Upper lobe of right lung (tissue), 1 donor: ENCODE measurements at regions of chr14 and their contacts with region 1.

Region 1: DNA sequence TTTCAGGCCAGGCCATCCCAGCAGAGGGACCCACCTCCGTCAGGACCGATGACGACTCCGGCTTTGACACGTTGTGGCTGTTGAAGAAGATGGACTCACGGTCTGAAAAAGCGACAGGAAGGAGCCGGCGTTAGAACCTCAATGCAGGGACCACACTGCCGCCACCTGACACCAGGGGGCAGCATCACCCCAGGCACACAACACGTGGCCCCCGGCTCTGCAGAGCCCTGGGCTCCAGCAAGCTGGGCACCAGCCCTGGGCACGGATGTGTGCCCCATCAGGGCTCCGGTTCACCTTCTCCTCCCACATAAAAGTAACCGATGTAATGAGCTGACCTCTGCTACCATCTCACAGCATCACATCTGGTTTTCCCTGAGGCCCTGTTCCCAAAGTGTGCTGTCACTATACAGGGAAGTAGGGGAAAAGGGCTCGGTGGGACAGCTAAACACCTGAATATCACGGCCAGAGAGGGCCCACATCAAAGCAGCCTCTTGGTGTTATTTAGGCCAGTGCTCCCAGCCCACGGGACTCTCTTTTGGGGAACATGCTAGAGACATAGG is 29.0 kb downstream of the CHGA start:
- DNase-seq: peak; percentile 89
- ATAC-seq: peak; percentile 94
- H3K4me3 ChIP-seq: no peak overlapping the region
- H3K27ac ChIP-seq: no peak overlapping the region
- H3K4me1 ChIP-seq: no peaks in the 10 kb centered on the region
- H3K27me3 ChIP-seq: no peaks in the 10 kb centered on the region
- CTCF ChIP-seq: peak; percentile 97

Region 2: GRCh38 chr14:93033983-93034670 is 82.1 kb after region 1 on chr14:
- intact Hi-C with region 1: no loop called
- DNase-seq: no peak
- ATAC-seq: peak; percentile 15
- H3K4me3 ChIP-seq: no peak overlapping the region
- H3K27ac ChIP-seq: no peak overlapping the region
- H3K4me1 ChIP-seq: peaks cover 49% of the 10 kb centered on the region
- H3K27me3 ChIP-seq: no peaks in the 10 kb centered on the region
- CTCF ChIP-seq: peak; percentile 42

Region 3: DNA sequence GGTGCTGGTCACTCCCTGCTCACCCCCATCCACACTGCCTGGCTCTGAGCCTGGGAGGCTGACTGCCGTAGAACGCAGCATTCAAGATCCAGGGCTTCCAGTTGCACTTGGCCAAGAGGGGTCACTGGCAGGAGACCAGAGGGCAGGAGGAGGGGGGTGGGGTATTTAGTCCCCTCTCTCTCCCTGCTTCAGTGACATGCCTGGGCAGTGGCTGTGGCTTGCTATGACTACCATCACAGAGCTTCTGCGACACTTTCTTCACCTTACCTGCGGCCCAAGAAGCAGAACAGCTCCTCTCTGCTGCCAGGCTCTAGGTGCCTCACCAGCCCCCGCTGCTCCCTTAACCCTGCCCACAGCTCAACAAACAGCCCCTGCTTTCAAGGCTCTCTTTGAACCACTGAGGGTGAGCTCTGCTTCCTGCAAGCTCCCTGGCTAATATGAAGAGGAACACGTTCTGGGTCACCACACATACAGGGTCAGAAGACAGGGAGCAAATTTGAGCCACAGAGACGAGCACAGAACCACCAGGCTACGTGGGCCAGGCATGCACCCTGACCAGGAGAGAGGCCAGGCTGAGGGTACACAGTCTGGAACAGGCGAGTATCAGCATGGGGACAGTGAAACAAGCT is 108.0 kb after region 1 on chr14:
- intact Hi-C with region 1: no loop called
- DNase-seq: no peak
- ATAC-seq: peak; percentile 18
- H3K4me3 ChIP-seq: no peak overlapping the region
- H3K27ac ChIP-seq: no peak overlapping the region
- H3K4me1 ChIP-seq: peaks cover under 1% of the 10 kb centered on the region
- H3K27me3 ChIP-seq: no peaks in the 10 kb centered on the region
- CTCF ChIP-seq: no peak

Region 4: GRCh38 chr14:93132470-93133065 is 180.6 kb after region 1 on chr14:
- intact Hi-C with region 1: loop called (anchors 10 kb)
- DNase-seq: no peak
- ATAC-seq: peak; percentile 78
- H3K4me3 ChIP-seq: no peak overlapping the region
- H3K27ac ChIP-seq: peak overlapping the region; percentile 42
- H3K4me1 ChIP-seq: peaks cover 11% of the 10 kb centered on the region
- H3K27me3 ChIP-seq: no peaks in the 10 kb centered on the region
- CTCF ChIP-seq: peak; percentile 46